ENCODE measurements at regions of chr4 and their contacts with region 1.

Region 1: DNA sequence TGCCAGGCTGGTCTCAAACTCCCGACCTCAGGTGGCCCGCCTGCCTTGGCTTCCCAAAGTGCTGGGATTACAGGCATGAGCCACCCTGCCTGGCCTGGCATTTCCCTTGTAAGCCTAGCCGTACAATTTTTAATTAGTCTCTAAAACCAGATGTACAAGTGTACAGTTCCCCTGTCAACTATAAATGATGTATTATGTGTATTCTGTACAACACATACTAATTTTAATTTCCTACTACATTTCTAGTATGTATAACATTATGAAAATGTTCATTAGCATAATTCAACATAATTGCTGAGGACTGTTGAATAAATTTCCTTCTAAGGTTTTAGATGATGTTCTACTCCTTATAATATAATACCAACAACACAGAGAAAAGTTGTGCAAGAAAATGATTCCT is 27.8 kb downstream of the TBC1D1 start:
- DNase-seq: no peak
- ATAC-seq: no peak
- H3K4me3 ChIP-seq: no peak overlapping the region
- H3K27ac ChIP-seq: no peak overlapping the region
- H3K4me1 ChIP-seq: no peaks in the 10 kb centered on the region
- H3K27me3 ChIP-seq: no peaks in the 10 kb centered on the region
- CTCF ChIP-seq: no peak
- POLR2A ChIP-seq: no peak
- RAD21 ChIP-seq: no peak

Region 2: DNA sequence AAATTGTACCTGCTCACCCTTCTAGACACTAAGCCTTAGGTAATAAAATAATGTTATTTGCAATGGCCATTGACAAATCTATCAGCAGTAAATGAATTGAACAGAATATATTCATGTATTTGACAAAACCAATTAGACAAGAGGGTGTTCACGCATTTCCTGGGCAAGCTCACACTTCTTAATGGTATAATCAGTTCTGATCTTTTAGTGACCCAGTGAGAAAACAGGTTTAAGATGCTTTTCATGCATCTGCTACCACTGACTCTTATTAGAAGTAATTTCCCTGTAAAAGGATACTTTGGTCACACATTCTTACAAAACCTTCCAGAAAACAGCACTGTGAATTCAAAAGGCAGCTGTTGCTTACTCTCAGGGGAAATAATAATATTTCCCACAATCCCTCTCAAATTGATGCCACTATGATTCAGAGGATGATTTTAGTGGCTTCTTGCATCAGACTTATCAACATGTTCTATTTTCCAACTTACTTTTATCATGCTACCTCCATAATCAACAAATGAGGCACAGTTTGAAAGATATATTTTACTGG is 988.0 kb before region 1 on chr4:
- CTCF ChIA-PET with region 1: no interaction called
- POLR2A ChIA-PET with region 1: no interaction called
- RAD21 ChIA-PET with region 1: no interaction called
- intact Hi-C with region 1: no loop called
- DNase-seq: no peak
- ATAC-seq: no peak
- H3K4me3 ChIP-seq: no peak overlapping the region
- H3K27ac ChIP-seq: no peak overlapping the region
- H3K4me1 ChIP-seq: no peaks in the 10 kb centered on the region
- H3K27me3 ChIP-seq: no peaks in the 10 kb centered on the region
- CTCF ChIP-seq: no peak
- POLR2A ChIP-seq: no peak
- RAD21 ChIP-seq: no peak

Region 3: GRCh38 chr4:37516057-37516775 is 402.4 kb before region 1 on chr4:
- CTCF ChIA-PET with region 1: no interaction called
- POLR2A ChIA-PET with region 1: no interaction called
- RAD21 ChIA-PET with region 1: no interaction called
- intact Hi-C with region 1: no loop called
- DNase-seq: no peak
- ATAC-seq: no peak
- H3K4me3 ChIP-seq: no peak overlapping the region
- H3K27ac ChIP-seq: no peak overlapping the region
- H3K4me1 ChIP-seq: no peaks in the 10 kb centered on the region
- H3K27me3 ChIP-seq: no peaks in the 10 kb centered on the region
- CTCF ChIP-seq: no peak
- POLR2A ChIP-seq: no peak
- RAD21 ChIP-seq: no peak

Region 4: GRCh38 chr4:37964734-37965457 is 46.2 kb after region 1 on chr4:
- CTCF ChIA-PET with region 1: no interaction called
- POLR2A ChIA-PET with region 1: no interaction called
- RAD21 ChIA-PET with region 1: no interaction called
- intact Hi-C with region 1: loop called (anchors 2 kb)
- DNase-seq: no peak
- ATAC-seq: no peak
- H3K4me3 ChIP-seq: no peak overlapping the region
- H3K27ac ChIP-seq: no peak overlapping the region
- H3K4me1 ChIP-seq: peaks cover 0 to 8% of the 10 kb centered on the region in 2 experiments; a peak in 1 of 4 replicates
- H3K27me3 ChIP-seq: no peaks in the 10 kb centered on the region
- CTCF ChIP-seq: no peak
- POLR2A ChIP-seq: no peak
- RAD21 ChIP-seq: no peak

Measured in HCT116 (cell line).